Upper lobe of right lung (tissue), 1 donor: ENCODE measurements at regions of chr17 and their contacts with region 1.

Region 1: GRCh38 chr17:15260376-15261257 is 4.5 kb downstream of the PMP22 start:
- DNase-seq: peak; percentile 92
- ATAC-seq: peak; percentile 89
- H3K4me3 ChIP-seq: peak overlapping the region; percentile 62
- H3K27ac ChIP-seq: peak overlapping the region; percentile 90
- H3K4me1 ChIP-seq: peaks cover 40% of the 10 kb centered on the region
- H3K27me3 ChIP-seq: no peaks in the 10 kb centered on the region
- CTCF ChIP-seq: peak; percentile 81

Region 2: DNA sequence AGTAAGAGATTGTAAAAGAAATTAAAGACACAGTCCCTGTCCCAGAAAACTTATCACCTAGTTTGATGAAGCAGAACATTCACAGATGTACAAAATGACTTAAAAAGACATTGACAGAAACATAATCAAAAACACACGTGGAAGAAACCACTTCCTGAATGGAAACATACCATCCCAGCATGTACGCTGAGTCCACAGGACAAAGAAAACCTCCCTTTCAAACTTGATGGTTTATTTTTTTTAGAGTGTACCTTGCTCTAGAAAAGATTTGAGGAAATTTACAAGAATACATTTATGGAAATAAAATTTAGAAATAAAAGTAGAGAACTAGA is 136.4 kb before region 1 on chr17:
- intact Hi-C with region 1: no loop called
- DNase-seq: no peak
- ATAC-seq: no peak
- H3K4me3 ChIP-seq: no peak overlapping the region
- H3K27ac ChIP-seq: no peak overlapping the region
- H3K4me1 ChIP-seq: no peaks in the 10 kb centered on the region
- H3K27me3 ChIP-seq: no peaks in the 10 kb centered on the region
- CTCF ChIP-seq: no peak

Region 3: GRCh38 chr17:15171167-15172047 is 89.2 kb before region 1 on chr17:
- intact Hi-C with region 1: no loop called
- DNase-seq: peak; percentile 80
- ATAC-seq: peak; percentile 94
- H3K4me3 ChIP-seq: no peak overlapping the region
- H3K27ac ChIP-seq: no peak overlapping the region
- H3K4me1 ChIP-seq: no peaks in the 10 kb centered on the region
- H3K27me3 ChIP-seq: no peaks in the 10 kb centered on the region
- CTCF ChIP-seq: peak; percentile 78

Region 4: GRCh38 chr17:15289285-15290185 is 28.9 kb after region 1 on chr17:
- intact Hi-C with region 1: no loop called
- DNase-seq: no peak
- ATAC-seq: no peak
- H3K4me3 ChIP-seq: no peak overlapping the region
- H3K27ac ChIP-seq: no peak overlapping the region
- H3K4me1 ChIP-seq: peaks cover 7% of the 10 kb centered on the region
- H3K27me3 ChIP-seq: no peaks in the 10 kb centered on the region
- CTCF ChIP-seq: no peak

Region 5: DNA sequence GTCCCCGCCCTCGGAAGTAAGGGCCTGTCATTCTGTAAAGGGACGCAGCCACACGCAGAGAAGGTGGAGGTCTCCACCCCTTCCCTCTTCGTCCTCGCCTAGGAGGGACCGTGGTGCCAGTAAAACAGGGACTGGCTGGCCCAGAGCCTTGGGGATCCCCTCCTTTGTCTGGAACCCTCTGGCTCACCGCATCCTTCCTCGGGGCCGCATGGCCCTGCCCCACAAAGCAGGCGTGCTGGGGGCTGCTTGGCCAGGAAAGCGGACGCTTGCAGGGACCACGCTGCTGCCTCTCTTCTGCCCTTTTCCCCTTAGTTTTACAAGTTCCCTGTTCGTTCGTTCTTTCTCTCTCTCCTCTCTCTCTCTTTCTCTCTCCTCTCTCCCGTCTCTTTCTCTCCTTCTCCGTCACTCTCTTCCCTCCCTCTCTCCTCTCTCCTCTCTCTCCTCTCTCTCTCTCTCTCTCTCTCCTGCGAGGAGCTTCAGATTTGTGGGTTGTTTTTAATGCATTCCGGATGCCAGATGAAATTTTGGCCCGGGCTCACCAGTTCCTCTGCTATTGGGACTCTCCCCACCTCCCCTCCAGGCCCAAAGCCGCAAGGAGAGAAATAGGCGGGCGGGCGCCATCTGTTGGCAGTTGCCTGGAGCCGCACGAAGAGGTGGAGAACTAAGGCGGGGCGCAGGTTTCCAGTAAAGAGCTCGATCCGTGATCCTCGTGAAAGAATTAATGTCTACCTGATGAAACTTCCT is 241.9 kb after region 1 on chr17:
- intact Hi-C with region 1: loop called (anchors 5 kb)
- DNase-seq: peak; percentile 90
- ATAC-seq: peak; percentile 96
- H3K4me3 ChIP-seq: peak overlapping the region; percentile 38
- H3K27ac ChIP-seq: peak overlapping the region; percentile 87
- H3K4me1 ChIP-seq: peaks cover 9% of the 10 kb centered on the region
- H3K27me3 ChIP-seq: no peaks in the 10 kb centered on the region
- CTCF ChIP-seq: peak; percentile 84